BJ (cell line): ENCODE measurements at regions of chr9 and their contacts with region 1.

Region 1: DNA sequence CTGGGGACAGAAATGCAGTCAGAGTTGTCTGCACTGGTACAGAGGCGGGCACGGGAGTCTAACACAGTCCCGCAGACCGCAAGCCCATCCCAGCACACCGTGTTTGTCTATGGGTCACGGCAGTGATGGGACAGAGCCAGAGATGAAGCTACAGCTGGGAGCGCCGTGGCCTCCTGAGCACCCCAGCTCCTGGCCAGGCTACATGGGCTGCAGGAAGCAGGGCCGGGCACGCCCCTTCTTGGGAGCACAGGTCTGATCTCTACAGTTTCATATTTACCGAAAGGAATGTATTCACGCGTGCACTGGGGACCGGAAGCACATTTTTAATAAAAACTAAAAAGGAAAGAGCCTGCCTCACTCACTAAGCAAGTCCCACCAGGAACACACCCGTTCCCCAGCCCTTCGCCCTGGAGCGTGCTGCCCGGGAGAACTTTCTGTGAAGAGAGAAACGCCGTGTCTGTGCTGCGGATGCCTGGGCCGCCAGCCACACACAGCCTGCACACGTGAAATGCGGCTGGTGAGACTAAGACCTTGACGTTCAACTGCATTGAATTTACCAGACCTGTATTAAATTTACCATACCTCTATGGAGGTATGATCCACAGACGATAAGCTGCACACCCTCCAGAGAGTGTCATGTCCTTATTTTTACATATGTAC is 81.1 kb downstream of the VAV2 start:
- DNase-seq: no peak
- H3K4me3 ChIP-seq: no peak overlapping the region
- H3K27me3 ChIP-seq: no peaks in the 10 kb centered on the region
- CTCF ChIP-seq: no peak

Region 2: DNA sequence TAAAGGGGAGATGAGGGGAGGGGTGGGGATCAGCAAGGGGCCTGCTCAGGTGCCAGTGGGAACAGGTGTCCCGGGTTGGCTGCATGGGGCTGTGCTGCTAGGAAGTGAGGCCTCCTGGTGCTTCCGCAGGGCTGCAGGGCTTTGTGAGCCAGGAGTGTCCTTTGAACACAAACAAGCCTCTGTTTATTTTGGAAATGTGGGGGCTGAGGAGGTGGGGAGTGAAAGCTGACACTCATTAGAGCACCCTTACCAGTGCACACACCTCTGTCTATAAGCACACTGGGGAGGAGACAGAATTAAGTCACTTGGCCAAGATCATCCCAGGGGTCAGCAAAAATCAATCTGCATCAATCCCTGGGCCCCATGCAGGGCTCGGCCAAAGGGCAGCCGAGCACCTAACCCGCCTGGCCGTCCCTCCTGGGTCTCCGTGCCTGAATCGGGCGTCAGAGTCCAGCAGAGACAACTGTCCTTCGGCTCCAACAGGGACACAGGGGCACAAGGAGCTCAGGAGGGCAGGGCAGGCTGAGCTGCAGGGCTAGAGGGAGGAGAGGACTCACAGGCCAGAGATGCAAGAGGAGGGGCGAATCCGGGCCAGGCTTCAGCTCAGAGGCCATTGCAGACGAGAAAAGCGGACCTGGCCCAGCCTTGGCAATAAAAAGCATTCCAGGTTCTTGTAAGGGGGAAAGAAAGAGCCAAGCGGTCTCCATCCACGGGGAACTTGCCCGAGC is 18.6 kb before region 1 on chr9:
- CTCF ChIA-PET with region 1: no interaction called
- POLR2A ChIA-PET with region 1: no interaction called
- DNase-seq: no peak
- H3K4me3 ChIP-seq: no peak overlapping the region
- H3K27me3 ChIP-seq: no peaks in the 10 kb centered on the region
- CTCF ChIP-seq: no peak

Region 3: DNA sequence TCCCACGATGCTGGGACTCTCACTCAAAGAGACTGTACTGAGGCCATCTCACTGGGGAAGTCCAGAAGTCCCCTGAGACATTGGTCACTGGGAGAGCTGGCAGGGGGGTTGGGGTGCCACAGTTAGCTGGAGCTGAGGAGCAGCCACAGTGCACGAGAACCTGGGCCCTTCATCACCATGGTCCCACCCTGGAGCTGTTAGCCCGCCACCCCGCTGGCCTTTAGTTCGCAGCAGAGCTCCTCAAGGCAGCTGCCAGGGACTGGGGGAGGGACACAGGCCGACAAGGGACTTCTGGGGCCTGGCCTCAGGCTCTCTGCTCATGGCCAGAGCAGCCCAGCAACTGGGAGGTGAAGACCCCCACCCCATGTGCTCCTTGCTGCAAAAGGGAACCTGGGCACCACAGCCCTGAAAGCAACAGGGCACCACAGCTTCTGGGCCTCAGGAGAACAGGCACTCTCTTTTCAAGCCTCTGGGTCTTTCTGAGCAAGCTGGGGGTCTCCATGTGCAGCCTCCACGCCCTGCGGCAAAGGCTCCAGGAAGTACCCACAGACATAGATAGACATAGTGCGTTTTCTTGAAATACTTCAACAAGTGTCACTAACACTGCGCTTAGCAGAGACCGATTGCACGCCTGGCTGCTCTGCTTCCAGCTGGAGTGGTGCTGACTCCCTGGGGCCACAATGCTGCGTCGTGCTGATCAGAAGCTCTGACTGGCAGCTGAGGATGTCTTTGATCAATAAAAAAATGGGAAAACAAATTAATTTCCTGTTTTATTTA is 35.2 kb after region 1 on chr9:
- CTCF ChIA-PET with region 1: no interaction called
- POLR2A ChIA-PET with region 1: interaction called, 11 read pairs
- DNase-seq: no peak
- H3K4me3 ChIP-seq: no peak overlapping the region
- H3K27me3 ChIP-seq: no peaks in the 10 kb centered on the region
- CTCF ChIP-seq: no peak